Gastrocnemius medialis (tissue), 4 donors: ENCODE measurements at regions of chr7 and their contacts with region 1.

Region 1: DNA sequence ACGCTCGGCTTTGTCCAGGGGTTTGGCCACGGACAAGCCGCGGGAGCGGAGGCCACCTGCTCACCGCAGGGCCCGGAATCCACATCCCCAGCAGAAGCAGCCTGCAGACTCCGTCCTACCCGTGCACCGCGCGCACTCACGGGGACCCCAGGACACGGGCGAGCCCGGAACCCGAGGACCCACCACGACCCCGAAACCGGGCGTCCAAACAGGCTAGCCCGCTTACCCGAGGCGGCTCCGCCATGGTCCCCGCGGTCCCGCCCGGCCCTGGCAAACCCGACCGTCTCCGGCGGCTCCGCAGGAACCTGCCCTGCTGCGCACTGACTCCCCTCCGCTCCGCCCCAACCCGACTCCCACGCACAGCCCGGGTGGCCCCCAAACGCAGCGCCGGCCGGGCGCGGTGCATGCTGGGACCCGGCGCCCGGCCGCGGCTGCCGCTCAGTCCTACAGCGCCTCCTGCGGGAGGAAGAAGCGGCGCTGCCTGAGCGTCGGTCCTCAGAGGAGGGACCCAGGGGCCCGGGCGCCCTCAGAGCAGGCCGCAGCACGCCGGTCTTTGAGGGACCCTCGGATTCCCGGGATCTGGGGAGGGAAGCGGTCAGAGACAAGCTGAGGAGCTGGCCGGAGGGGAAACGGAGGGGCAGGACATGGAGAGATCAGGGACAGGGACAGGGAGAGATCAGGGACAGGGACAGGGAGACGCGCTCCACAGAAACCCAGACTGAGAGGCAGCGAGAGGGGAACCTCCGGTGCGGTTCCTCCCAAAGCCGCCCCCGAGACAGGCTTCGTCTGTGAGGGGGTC is at the start of gene ZNF786:
- DNase-seq: peak; percentile 70 to 73
- ATAC-seq: peak; percentile 91 to 94
- H3K4me3 ChIP-seq: peak within 1 kb of the TSS; percentile 95 to 99 (median 96)
- H3K27ac ChIP-seq: peak within 1 kb of the TSS; percentile 90 to 100 (median 94)
- H3K4me1 ChIP-seq: peaks cover 6 to 10% of the 10 kb centered on the region in 2 donors
- H3K27me3 ChIP-seq: no peaks in the 10 kb centered on the region
- CTCF ChIP-seq: peak; percentile 86 to 98 (median 94)
- POLR2A ChIP-seq: peak; percentile 67 to 81
- total RNA-seq, gene ZNF786: 1.9 to 6.1 (median 2.7) TPM

Region 2: DNA sequence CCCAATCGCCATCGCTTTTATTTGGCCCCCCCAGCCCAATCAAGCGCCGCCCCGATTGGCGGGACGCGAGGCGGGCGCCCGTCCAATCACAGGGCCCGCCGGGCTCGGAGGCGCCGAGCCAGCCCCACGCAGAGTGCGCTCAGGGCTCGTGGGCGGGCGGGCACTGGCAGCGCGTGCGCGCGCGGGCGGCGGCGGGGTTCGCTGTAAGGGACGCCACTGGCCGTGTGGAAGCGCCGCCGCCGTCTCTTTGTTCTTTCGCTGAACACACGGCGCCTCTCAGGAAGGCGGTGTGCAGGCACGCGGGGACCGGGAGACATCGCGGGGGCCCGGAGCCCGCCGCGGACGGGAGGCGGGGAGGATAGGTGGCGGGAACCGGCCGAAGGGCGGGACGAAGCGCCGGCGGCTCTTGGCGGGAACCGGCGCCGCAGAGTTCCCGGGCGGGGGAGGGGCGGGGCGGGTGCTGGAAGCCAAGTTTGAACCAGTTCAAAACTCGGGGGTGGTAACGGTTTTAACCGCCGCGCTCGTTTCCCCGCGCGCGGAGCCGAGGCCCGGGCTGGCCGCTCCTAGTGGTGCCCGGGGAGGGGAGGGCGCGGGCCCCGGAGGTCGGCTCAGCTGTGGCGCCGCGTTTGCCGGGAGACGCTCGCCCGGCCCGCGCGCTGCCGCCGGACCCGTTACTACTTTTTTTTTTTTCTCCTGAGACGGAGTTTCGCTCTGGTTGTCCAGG is 206.1 kb before region 1 on chr7:
- in situ Hi-C with region 1: no loop called
- intact Hi-C with region 1: loop called (anchors 2 kb)
- DNase-seq: peak; percentile 88 to 92
- ATAC-seq: peak; percentile 91 to 93
- H3K4me3 ChIP-seq: peak overlapping the region; percentile 74 to 92 (median 85)
- H3K27ac ChIP-seq: peak overlapping the region; percentile 87 to 96 (median 92)
- H3K4me1 ChIP-seq: peaks cover 7 to 8% of the 10 kb centered on the region in 2 donors
- H3K27me3 ChIP-seq: peaks cover 0 to 3% (median 0%) of the 10 kb centered on the region in 3 donors
- CTCF ChIP-seq: no peak
- POLR2A ChIP-seq: peak; percentile 91 to 92

Region 3: GRCh38 chr7:149005241-149006050 is 85.2 kb before region 1 on chr7:
- in situ Hi-C with region 1: loop called in 3 of 4 experiments (anchors 5 to 10 kb)
- intact Hi-C with region 1: loop called (anchors 1 kb)
- DNase-seq: peak; percentile 59 to 72
- ATAC-seq: peak; percentile 82 to 94
- H3K4me3 ChIP-seq: no peak overlapping the region
- H3K27ac ChIP-seq: no peak overlapping the region
- H3K4me1 ChIP-seq: no peaks in the 10 kb centered on the region
- H3K27me3 ChIP-seq: no peaks in the 10 kb centered on the region
- CTCF ChIP-seq: peak; percentile 76 to 92 (median 87)
- POLR2A ChIP-seq: no peak

Region 4: DNA sequence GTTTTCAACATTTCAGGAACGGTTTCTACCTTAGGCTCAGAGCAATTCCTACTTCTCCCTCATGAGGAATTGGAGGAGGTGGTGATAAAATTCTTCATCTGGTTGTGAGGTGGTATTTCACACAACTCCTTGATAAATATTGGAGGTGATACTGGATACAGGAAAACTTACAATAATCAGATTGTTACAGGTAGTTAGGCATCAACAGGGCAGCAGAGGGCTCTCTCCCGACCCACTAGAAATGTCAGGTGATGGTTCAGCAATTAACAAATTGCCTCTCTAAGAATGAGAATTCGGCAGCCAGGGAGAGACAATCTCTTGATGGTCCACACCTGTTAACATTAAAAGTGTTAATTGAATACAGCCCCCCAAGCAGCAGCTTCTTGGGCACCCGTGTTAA is 22.7 kb before region 1 on chr7:
- in situ Hi-C with region 1: no loop called
- intact Hi-C with region 1: loop called (anchors 1 kb)
- DNase-seq: no peak
- ATAC-seq: no peak
- H3K4me3 ChIP-seq: no peak overlapping the region
- H3K27ac ChIP-seq: no peak overlapping the region
- H3K4me1 ChIP-seq: no peaks in the 10 kb centered on the region
- H3K27me3 ChIP-seq: no peaks in the 10 kb centered on the region
- CTCF ChIP-seq: no peak
- POLR2A ChIP-seq: no peak

Region 5: DNA sequence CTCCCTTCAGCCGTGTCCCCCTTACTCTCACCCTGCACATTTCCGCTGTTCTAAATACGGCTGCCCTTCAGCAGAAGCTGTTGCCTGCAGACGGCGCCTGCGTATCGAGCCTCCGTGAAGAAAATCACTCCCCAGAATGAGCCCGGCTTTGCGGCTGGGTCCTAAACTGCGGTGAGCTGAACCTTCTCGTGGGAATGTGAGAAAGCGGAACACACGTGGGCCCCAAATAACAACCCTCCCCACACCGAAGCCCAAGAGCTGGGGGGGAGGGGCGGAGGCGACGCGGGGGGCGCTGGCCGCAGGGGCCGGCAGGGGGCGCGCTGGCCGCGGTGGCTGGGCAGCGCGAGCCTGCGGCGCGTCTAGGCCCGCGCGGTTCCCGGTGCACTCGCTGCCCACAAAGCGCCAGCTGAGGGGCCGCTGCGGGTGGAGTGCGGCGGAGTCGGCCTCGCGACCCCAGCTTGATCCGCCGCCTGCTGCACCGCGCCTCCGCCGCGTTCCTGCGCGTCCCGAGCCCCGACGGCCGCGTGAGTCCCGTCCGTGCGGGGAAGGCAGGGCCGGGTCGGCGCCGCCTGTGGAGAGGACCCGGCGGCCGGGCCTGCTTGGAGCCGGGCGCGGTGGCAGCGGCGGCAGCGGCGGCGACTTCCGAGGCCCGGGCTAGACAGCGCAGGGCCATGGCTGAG is 56.6 kb after region 1 on chr7 and contains the start of gene ZNF398:
- in situ Hi-C with region 1: no loop called
- intact Hi-C with region 1: loop called (anchors 2 kb)
- DNase-seq: peak; percentile 54 to 58
- ATAC-seq: peak; percentile 87 to 92
- H3K4me3 ChIP-seq: peak within 1 kb of the TSS; percentile 76 to 98 (median 94)
- H3K27ac ChIP-seq: peak within 1 kb of the TSS; percentile 85 to 96 (median 92)
- H3K4me1 ChIP-seq: peaks cover 6 to 13% of the 10 kb centered on the region in 2 donors
- H3K27me3 ChIP-seq: no peaks in the 10 kb centered on the region
- CTCF ChIP-seq: peak; percentile 65 to 98 (median 82)
- POLR2A ChIP-seq: peak; percentile 50 to 68
- total RNA-seq, gene ZNF398: 12.8 to 19.9 (median 15.0) TPM

Region 6: GRCh38 chr7:149161241-149161848 is 70.7 kb after region 1 on chr7:
- in situ Hi-C with region 1: no loop called
- intact Hi-C with region 1: no loop called
- DNase-seq: no peak
- ATAC-seq: no peak
- H3K4me3 ChIP-seq: no peak overlapping the region
- H3K27ac ChIP-seq: no peak overlapping the region
- H3K4me1 ChIP-seq: peaks cover 0 to 6% of the 10 kb centered on the region in 2 donors
- H3K27me3 ChIP-seq: no peaks in the 10 kb centered on the region
- CTCF ChIP-seq: no peak
- POLR2A ChIP-seq: no peak

Region 7: DNA sequence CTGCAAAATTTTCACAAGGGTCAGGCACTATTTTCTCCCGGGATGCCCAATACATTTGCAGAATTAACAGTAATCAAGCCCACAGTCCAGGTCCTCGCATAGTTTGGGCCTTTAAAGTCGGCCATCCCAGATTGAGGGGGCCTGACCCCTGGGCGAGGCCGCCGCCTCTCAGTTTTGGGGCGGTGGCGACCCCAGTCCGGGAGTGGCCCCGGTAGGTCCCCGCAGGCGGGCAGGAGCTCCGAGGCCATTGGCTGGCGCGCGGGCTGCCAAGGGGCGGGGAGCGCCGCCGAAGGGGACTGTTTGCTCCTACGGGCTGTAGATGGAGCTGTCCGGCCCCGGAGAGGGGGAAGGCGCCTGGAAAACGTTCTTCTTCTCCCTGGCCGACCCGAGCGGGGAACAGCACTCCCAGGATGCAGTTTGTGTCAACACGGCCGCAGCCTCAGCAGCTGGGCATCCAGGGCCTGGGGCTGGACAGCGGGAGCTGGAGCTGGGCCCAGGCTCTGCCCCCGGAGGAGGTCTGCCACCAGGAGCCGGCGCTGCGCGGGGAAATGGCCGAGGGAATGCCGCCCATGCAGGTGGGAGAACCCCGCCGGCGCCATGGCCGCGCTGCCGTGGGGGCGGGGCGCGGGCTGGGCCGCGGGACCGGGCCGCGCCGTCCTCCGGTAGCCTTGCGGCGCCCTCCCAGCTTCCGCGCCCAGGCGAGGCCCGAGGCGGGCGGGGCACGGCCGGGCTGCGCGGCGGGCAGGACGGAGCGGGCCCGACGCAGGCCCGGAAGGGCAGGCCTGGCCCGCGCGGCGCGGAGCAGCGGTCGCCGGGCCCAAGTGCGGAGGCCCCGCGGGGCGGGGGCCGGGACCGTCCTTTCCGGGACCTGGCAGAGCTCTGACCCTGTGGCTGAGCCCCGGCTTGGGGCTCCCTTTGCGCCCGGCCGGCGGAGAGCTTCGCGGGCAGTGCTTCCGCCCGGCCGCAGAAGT is 104.9 kb after region 1 on chr7 and contains the start of gene ZNF282:
- in situ Hi-C with region 1: no loop called
- intact Hi-C with region 1: no loop called
- DNase-seq: peak; percentile 74 to 87
- ATAC-seq: peak; percentile 95 to 96
- H3K4me3 ChIP-seq: peak within 1 kb of the TSS; percentile 76 to 87 (median 80)
- H3K27ac ChIP-seq: peak within 1 kb of the TSS; percentile 80 to 96 (median 86)
- H3K4me1 ChIP-seq: peaks cover 9 to 17% of the 10 kb centered on the region in 2 donors
- H3K27me3 ChIP-seq: peaks cover 0 to 2% (median 0%) of the 10 kb centered on the region in 3 donors
- CTCF ChIP-seq: peak in 4 of 5 experiments; percentile 33 to 71 (median 54)
- POLR2A ChIP-seq: peak; percentile 41 to 43
- total RNA-seq, gene ZNF282: 16.8 to 24.1 (median 23.0) TPM